Common myeloid progenitor, CD34-positive (primary cell): ENCODE measurements at regions of chr12 and their contacts with region 1.

Region 1: GRCh38 chr12:121668750-121669520 is 519 bp downstream of the MORN3 start:
- DNase-seq: peak; percentile 77 to 86 (median 81)
- H3K4me3 ChIP-seq: no peak overlapping the region
- H3K27ac ChIP-seq: no peak overlapping the region
- H3K4me1 ChIP-seq: peaks cover 3 to 48% (median 34%) of the 10 kb centered on the region in 4 experiments
- H3K27me3 ChIP-seq: no peaks in the 10 kb centered on the region

Region 2: DNA sequence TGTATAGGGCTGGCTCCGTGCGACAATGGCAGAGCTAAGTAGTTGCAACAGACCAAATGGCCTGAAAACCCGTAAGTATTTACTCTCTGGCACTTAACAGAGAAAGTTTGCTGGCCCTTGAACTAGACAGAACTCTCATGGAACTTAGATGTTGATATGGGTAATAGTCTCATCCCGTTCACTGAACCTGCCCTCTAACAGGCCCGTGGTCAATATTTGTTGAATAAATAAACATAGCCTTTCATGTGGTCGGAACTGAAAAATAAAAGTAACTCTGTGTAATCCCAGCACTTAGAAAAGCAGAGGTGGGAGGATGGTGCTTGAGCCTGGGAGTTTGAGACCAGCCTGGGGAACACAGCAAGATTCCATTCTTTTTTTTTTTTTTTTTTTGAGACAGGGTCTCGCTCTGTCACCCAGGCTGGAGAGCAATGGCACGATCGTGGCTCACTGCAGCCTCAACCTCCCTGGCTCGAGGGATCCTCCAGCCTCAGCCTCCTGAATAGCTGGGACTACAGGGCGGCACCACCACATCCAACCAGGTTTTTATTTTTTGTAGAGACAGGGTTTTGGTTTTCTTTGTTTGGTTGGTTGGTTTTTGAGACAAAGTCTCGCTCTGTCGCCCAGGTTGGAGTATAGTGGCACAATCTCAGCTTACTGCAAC is 117.8 kb before region 1 on chr12:
- CTCF ChIA-PET with region 1: interaction called, 150 read pairs
- POLR2A ChIA-PET with region 1: interaction called, 10 read pairs
- DNase-seq: no peak
- H3K4me3 ChIP-seq: no peak overlapping the region
- H3K27ac ChIP-seq: no peak overlapping the region
- H3K4me1 ChIP-seq: peaks cover 0 to 13% (median 8%) of the 10 kb centered on the region in 4 experiments
- H3K27me3 ChIP-seq: no peaks in the 10 kb centered on the region

Region 3: DNA sequence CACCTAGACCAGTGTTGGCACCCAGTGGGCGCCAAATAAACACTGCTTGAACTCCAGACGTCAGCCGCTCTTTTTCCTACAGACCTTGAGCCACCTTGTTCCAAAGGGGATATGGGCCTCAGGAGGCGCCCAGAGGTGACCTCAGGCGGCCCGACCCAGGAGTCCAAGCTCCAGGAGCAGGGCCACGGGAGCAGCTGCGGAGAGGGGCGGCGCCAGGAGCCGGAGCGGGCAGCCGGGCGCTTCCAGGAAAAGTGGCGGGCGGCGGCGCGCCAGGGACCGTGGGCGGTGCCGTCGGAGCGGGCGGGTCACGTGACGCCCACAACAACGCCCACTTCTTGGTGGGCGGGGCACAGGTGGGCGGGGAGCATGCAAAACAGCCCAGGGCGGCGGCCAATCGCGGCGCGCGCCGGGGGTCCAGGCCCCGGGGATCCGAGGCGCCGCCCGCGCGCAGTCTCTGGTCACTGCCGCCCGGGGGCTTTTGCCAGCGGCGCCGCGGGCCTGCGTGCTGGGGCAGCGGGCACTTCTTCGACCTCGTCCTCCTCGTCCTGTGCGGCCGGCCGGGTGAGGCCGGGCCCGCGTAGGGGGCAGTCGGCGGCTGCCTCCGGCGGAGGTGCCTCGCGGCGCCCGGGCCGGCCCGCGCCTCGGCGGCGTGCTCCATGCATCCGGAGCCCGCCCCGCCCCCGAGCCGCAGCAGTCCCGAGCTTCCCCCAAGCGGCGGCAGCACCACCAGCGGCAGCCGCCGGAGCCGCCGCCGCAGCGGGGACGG is 42.7 kb before region 1 on chr12 and contains the start of gene ORAI1:
- CTCF ChIA-PET with region 1: interaction called, 174 read pairs
- POLR2A ChIA-PET with region 1: interaction called, 15 read pairs
- DNase-seq: peak; percentile 92 to 95 (median 95)
- H3K4me3 ChIP-seq: peak within 1 kb of the TSS; percentile 73 to 94 (median 77)
- H3K27ac ChIP-seq: peak within 1 kb of the TSS; percentile 92 to 96
- H3K4me1 ChIP-seq: peaks cover 21 to 54% (median 49%) of the 10 kb centered on the region in 4 experiments
- H3K27me3 ChIP-seq: no peaks in the 10 kb centered on the region

Region 4: DNA sequence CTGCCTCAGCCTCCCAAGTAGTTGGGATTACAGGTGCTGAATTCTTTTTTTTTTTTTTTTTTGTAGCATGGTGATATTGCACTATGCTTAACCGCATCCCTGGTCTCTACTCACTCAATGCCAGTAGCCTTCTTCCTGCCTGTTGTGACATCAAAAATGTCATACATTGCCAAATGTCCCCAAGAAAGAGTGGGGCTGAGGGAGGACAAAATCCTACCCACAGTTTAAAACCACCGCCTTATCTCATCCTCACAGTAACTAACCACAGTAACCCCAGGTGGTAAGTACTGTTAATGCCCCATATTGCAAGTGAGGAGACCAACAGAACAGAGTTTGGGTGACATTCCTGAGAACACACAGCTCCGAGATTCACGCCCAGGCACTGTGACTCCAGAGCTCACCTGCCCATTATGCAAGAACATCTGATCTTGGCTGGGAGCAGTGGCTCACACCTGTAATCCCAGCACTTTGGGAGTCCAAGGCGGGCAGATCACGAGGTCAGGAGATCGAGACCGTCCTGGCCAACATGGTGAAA is 19.0 kb before region 1 on chr12:
- CTCF ChIA-PET with region 1: interaction called, 11 read pairs
- POLR2A ChIA-PET with region 1: interaction called, 8 read pairs
- DNase-seq: peak; percentile 96 to 99 (median 99)
- H3K4me3 ChIP-seq: no peak overlapping the region
- H3K27ac ChIP-seq: no peak overlapping the region
- H3K4me1 ChIP-seq: peaks cover 5 to 55% (median 30%) of the 10 kb centered on the region in 4 experiments
- H3K27me3 ChIP-seq: no peaks in the 10 kb centered on the region

Region 5: GRCh38 chr12:121678716-121679580 is 10.0 kb after region 1 on chr12:
- CTCF ChIA-PET with region 1: interaction called, 65 read pairs
- POLR2A ChIA-PET with region 1: interaction called, 6 read pairs
- DNase-seq: peak in 1 of 3 donors; percentile 37
- H3K4me3 ChIP-seq: no peak overlapping the region
- H3K27ac ChIP-seq: no peak overlapping the region
- H3K4me1 ChIP-seq: peaks cover 0 to 6% (median 4%) of the 10 kb centered on the region in 4 experiments
- H3K27me3 ChIP-seq: no peaks in the 10 kb centered on the region

Region 6: DNA sequence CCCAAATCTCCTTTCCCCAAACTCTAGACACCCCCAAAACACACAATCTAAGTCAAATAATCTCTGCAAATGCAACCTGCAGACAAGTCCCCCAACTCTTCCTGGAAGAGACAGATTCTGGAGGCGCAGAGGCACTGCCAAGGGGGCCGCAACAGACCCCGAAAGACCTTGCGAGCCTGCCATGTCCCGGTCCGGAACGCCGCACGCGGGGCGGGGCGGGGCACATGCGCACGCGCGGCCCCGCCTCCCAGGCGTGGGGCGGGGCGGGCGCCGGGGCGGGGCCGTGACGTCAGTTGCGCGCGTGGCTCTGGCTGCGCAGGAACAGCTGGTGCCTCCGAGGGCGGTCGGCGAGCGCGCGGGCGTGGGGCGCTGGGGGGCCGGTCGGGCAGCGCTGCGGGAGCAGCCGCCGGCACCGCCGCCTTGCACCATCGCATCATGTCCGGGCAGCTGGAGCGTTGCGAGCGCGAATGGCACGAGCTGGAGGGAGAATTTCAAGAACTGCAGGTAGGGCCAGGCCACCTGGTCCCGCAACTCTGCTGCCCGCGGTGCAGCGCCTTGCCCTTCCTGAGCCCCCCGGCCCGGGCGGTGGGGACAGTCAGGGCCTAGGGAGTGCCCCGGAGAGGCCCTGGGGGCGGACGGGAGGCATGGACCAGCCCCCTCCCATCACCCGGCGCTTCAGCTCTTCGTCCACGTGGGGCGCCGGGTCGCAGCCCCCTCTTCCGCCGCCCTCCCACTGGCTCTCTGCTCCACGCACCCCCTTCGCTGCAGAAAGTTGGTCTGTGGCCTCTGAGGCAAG is 43.7 kb after region 1 on chr12 and contains the start of gene TMEM120B:
- CTCF ChIA-PET with region 1: no interaction called
- POLR2A ChIA-PET with region 1: no interaction called
- DNase-seq: peak; percentile 65 to 78 (median 73)
- H3K4me3 ChIP-seq: peak within 1 kb of the TSS; percentile 44 to 92 (median 83)
- H3K27ac ChIP-seq: peak within 1 kb of the TSS; percentile 33 to 82
- H3K4me1 ChIP-seq: peaks cover 3 to 30% (median 19%) of the 10 kb centered on the region in 4 experiments
- H3K27me3 ChIP-seq: no peaks in the 10 kb centered on the region

Region 7: GRCh38 chr12:121762269-121762668 is 93.3 kb after region 1 on chr12:
- CTCF ChIA-PET with region 1: no interaction called
- POLR2A ChIA-PET with region 1: no interaction called
- DNase-seq: no peak
- H3K4me3 ChIP-seq: no peak overlapping the region
- H3K27ac ChIP-seq: no peak overlapping the region
- H3K4me1 ChIP-seq: no peaks in the 10 kb centered on the region
- H3K27me3 ChIP-seq: no peaks in the 10 kb centered on the region